ENCODE measurements at regions of chrX and their contacts with region 1.

Region 1: GRCh38 chrX:74187211-74187610 is 116.8 kb upstream of the ZCCHC13 start:
- DNase-seq: no peak

Region 2: GRCh38 chrX:74119016-74119910 is 67.9 kb before region 1 on chrX:
- intact Hi-C with region 1: loop called in 1 of 2 experiments (anchors 2 kb)
- DNase-seq: no peak

Measured in posterior vena cava (tissue), 2 donors.